Heart left ventricle (tissue), 16 donors: ENCODE measurements at regions of chr1 and their contacts with region 1.

Region 1: DNA sequence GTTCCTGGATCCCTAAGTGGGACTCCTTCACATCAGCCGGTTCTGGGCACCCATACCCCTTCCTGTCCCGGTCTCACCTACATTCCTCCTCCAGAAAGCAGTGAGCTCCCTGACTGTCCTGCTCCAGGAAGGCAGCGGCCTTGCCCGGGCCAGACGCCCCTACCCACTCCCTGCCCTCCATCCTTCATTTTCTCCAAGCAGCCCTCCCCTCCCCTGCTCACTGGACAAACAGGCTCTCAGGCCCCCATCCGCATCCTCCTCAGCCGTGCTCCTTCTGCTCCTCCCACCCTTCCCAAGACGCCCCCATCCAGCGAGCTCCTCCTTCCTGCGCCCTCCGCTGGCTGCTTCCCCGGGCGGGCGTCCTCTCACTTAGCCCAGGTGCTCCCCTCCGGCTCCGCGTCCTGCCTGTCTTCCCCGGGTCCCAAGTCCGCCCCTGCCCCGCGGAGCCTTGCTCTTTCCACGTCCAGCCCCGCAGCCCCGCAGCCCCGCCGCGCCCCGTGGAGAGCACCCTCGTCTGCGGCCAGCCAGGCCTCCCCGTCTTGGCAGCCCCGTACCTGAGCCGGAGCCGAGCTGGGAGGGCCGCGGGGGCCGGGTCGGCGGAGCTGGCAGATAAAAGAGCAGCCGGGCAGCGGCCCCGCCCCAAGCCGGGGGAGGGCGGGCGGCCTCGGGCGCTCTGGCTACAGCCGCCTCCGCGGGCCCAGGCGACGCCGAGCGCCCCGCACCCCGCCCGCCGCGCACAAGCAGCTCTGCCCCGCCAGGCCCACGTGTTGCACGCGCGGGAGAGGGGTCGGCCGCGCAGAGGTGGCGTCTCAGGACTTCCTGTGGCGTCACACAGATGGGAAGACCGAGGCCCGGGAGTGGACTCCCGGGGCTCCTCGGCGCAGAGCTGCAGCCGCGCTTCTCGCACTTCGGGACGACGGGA is at the start of gene PAQR7:
- DNase-seq: peak; percentile 73 to 87 (median 82)
- ATAC-seq: peak; percentile 61 to 88 (median 87)
- H3K4me3 ChIP-seq: peak within 1 kb of the TSS; percentile 39 to 88 (median 66)
- H3K27ac ChIP-seq: peak within 1 kb of the TSS in 11 of 12 donors; percentile 33 to 90 (median 69)
- H3K4me1 ChIP-seq: peaks cover 0 to 43% (median 25%) of the 10 kb centered on the region in 12 donors
- H3K27me3 ChIP-seq: no peaks in the 10 kb centered on the region
- CTCF ChIP-seq: peak in 3 of 12 donors; percentile 4 to 14 (median 9)
- POLR2A ChIP-seq: peak; percentile 31 to 42
- total RNA-seq, gene PAQR7: 1.1 to 5.7 (median 2.1) TPM

Region 2: GRCh38 chr1:25819576-25820246 is 55.5 kb before region 1 on chr1 and contains the start of gene MTFR1L:
- intact Hi-C with region 1: loop called in 1 of 10 experiments (anchors 10 kb)
- DNase-seq: peak; percentile 90 to 93 (median 92)
- ATAC-seq: peak; percentile 89 to 91 (median 90)
- H3K4me3 ChIP-seq: peak within 1 kb of the TSS; percentile 74 to 98 (median 89)
- H3K27ac ChIP-seq: peak within 1 kb of the TSS; percentile 81 to 98 (median 92)
- H3K4me1 ChIP-seq: peaks cover 0 to 59% (median 34%) of the 10 kb centered on the region in 12 donors
- H3K27me3 ChIP-seq: no peaks in the 10 kb centered on the region
- CTCF ChIP-seq: no peak
- POLR2A ChIP-seq: peak in 1 of 2 donors; percentile 89
- total RNA-seq, gene MTFR1L: 123 to 319 (median 214) TPM